Prostate gland (tissue), 2 donors: ENCODE measurements at regions of chr20 and their contacts with region 1.

Region 1: DNA sequence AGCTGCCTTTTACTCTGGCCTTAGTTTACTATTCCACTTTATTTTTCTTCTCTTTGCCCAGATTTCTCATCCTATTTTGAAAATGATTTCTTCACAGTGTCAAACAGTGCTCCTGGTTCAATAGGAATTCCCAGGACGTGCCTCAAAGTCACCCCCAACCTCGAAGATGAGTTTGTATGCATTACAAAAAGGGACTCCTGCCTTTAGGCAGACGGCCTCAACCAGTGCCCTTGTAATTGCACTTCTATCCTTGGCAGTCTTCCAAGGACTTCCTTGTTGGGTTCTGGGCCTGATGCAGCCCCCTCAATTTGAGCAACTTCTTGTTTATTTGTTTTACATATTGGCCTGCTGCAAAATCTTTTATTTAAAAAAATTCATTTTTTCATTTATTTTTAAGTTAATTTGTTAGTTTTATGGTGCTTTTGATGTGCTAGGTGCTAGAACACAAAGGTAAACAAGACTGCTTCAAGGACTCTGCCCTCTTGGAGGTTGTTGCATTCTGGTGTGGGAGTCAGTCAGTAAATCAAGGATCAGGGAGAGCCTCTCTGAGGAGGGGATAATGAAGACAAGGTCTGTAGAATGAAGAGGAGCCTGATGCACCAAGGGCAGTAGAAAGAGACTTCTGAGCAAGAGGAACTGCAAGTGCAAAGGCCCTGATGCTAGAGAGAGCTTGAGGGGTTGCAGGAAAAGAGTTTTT is 181.5 kb upstream of the LAMP5 start:
- DNase-seq: no peak
- H3K4me3 ChIP-seq: no peak overlapping the region
- H3K27ac ChIP-seq: no peak overlapping the region
- H3K4me1 ChIP-seq: no peaks in the 10 kb centered on the region
- H3K27me3 ChIP-seq: no peaks in the 10 kb centered on the region
- CTCF ChIP-seq: no peak
- POLR2A ChIP-seq: no peak

Region 2: GRCh38 chr20:9220874-9221547 is 111.9 kb before region 1 on chr20:
- intact Hi-C with region 1: loop called (anchors 10 kb)
- DNase-seq: no peak
- H3K4me3 ChIP-seq: no peak overlapping the region
- H3K27ac ChIP-seq: no peak overlapping the region
- H3K4me1 ChIP-seq: no peaks in the 10 kb centered on the region
- H3K27me3 ChIP-seq: no peaks in the 10 kb centered on the region
- CTCF ChIP-seq: no peak
- POLR2A ChIP-seq: no peak

Region 3: GRCh38 chr20:9660236-9660868 is 327.4 kb after region 1 on chr20:
- intact Hi-C with region 1: no loop called
- DNase-seq: no peak
- H3K4me3 ChIP-seq: no peak overlapping the region
- H3K27ac ChIP-seq: no peak overlapping the region
- H3K4me1 ChIP-seq: no peaks in the 10 kb centered on the region
- H3K27me3 ChIP-seq: no peaks in the 10 kb centered on the region
- CTCF ChIP-seq: no peak
- POLR2A ChIP-seq: no peak